Activated CD8-positive, alpha-beta T cell treated with anti-CD3 and anti-CD28 coated beads for 36 hours (primary cell): ENCODE measurements at regions of chr1 and their contacts with region 1.

Region 1: DNA sequence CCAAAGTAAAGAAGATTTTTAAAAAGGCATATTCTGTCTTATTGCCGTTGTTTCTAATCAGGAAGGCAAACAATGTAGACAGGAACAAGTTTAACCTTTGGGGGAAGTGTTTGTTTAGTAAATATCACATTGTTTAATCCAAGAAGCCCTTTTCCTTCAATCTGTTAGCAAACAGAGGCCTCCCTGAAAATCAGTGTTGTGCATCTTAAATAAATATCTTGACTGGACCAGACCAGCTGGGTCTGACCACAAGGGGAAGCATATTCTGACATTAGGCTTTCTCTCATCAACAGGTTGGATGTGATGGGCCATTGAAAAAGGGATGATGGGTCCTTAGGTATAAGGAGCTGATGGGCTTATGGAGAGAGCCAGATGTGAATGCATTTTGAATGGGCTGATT is 81.8 kb upstream of the SGIP1 start:
- DNase-seq: no peak
- ATAC-seq: no peak
- H3K4me3 Mint-ChIP-seq: no peak overlapping the region
- H3K27ac Mint-ChIP-seq: no peak overlapping the region
- H3K4me1 Mint-ChIP-seq: no peaks in the 10 kb centered on the region
- H3K27me3 Mint-ChIP-seq: peaks cover 9% of the 10 kb centered on the region
- CTCF ChIP-seq: no peak

Region 2: DNA sequence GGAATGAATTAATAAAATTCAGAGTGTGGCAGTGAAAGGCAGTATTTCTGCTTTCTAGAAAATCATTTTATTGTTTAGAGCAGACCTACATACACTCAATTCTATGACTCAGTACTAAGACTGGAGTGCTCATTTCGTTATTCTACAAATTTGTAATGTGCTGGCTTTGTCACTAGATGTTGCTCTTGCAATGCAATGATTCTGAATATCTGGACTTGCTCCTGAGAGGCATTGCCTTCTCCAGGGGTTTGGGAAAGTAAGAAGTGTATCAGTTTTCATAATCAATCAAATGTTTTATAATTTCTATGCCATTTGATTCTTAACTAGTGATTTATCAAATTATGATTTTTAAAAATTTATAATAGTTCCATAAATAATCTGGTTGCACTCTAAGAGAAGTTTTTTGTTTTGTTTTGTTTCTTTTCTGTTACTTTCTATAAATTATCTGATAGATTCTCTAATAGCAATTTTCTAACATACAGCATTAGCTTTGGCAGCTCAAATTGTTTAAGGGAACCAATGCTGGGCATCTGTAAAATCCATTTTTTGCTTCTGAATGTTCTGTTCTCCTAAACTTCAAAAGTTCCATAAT is 198.7 kb before region 1 on chr1:
- CTCF ChIA-PET with region 1: interaction called, 512 read pairs
- POLR2A ChIA-PET with region 1: interaction called, 15 read pairs
- intact Hi-C with region 1: no loop called
- DNase-seq: no peak
- ATAC-seq: peak; percentile 89
- H3K4me3 Mint-ChIP-seq: no peak overlapping the region
- H3K27ac Mint-ChIP-seq: no peak overlapping the region
- H3K4me1 Mint-ChIP-seq: peaks cover 46% of the 10 kb centered on the region
- H3K27me3 Mint-ChIP-seq: peaks cover 1% of the 10 kb centered on the region
- CTCF ChIP-seq: peak; percentile 83

Region 3: GRCh38 chr1:66624412-66625060 is 172.4 kb after region 1 on chr1:
- CTCF ChIA-PET with region 1: no interaction called
- POLR2A ChIA-PET with region 1: no interaction called
- intact Hi-C with region 1: no loop called
- DNase-seq: no peak
- ATAC-seq: peak; percentile 77
- H3K4me3 Mint-ChIP-seq: no peak overlapping the region
- H3K27ac Mint-ChIP-seq: no peak overlapping the region
- H3K4me1 Mint-ChIP-seq: peaks cover 10% of the 10 kb centered on the region
- H3K27me3 Mint-ChIP-seq: no peaks in the 10 kb centered on the region
- CTCF ChIP-seq: no peak